ENCODE measurements at regions of chr1 and their contacts with region 1.

Region 1: GRCh38 chr1:112144733-112145426 is 155.4 kb upstream of the KCND3 start:
- DNase-seq: no peak

Region 2: GRCh38 chr1:111801071-111801841 is 343.6 kb before region 1 on chr1:
- intact Hi-C with region 1: loop called (anchors 10 kb)
- DNase-seq: peak; percentile 80

Region 3: GRCh38 chr1:111904478-111905218 is 240.2 kb before region 1 on chr1:
- intact Hi-C with region 1: loop called (anchors 10 kb)
- DNase-seq: peak; percentile 76

Region 4: DNA sequence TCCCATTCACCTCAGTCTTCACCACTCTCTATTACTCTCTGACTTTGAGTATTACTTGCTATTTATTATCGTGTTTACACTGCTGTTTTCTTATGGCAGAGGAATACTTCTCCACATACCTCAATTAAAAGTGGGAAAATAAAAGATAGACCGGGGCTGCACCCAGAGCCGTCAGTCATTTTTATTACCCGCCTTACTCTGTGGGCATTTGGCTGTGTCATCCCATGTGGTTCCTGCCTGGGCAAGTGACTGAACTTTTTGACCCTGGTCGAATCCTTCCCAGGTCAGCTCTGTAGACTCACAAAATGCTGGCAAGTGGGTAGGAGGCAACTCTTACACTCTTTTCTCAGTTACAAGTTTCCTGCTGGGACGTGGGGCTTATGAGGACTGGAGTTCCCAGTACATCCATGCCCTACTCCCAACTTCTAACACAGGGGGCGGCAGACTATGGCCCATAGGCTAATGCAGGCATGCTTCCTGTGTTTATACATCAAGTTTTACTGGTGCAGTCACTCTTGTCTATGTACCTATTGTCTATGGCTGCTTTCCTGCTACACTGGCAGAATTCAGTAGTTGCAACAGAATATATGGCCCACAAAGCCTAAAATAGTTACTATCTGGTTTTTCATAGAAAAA is 85.9 kb before region 1 on chr1:
- intact Hi-C with region 1: loop called (anchors 5 kb)
- DNase-seq: no peak

Region 5: DNA sequence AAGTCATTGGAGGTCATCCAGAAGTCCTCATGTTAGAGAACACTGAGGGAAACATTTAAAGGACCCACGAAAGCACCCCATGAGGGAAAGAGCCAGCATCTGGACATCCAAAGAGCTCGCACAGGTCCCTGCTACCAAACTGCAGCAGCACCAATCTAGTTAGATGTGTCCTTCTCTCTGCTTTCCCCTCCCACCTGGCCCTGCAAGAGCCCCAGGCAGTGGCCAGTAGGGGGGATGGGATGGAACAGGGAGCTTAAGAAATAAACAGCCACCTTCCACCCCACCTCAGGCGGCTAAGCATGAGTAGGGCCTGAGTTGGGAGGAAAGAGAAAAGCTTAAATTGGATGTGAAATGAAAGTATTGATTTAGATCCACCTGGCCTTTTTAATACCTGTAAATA is 20.5 kb after region 1 on chr1:
- intact Hi-C with region 1: loop called (anchors 2 kb)
- DNase-seq: no peak

Region 6: DNA sequence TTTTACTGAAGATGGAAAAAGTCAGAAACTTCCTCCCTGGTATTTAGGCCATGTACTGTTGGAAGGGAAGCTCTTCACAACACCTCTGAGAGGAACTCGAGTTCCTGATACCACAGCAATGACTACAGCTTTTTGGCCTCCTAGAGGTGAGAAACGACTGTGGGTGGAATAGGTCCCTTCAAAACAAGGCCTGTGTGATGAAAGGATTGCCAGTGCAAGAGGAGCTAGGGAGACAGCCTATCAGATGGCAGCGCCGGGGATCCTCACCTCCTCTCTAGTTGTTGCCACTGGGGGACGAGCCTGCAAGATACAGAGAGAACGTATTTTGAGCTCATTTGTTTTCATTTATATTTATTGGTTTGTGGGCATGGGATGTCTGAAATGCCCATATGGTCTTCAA is 32.4 kb after region 1 on chr1:
- intact Hi-C with region 1: no loop called
- DNase-seq: no peak